GM13976 (cell line): ENCODE measurements at regions of chr9 and their contacts with region 1.

Region 1: GRCh38 chr9:129139993-129140396 is 28.8 kb downstream of the PTPA start:
- DNase-seq: peak; percentile 93
- CTCF ChIP-seq: no peak

Region 2: DNA sequence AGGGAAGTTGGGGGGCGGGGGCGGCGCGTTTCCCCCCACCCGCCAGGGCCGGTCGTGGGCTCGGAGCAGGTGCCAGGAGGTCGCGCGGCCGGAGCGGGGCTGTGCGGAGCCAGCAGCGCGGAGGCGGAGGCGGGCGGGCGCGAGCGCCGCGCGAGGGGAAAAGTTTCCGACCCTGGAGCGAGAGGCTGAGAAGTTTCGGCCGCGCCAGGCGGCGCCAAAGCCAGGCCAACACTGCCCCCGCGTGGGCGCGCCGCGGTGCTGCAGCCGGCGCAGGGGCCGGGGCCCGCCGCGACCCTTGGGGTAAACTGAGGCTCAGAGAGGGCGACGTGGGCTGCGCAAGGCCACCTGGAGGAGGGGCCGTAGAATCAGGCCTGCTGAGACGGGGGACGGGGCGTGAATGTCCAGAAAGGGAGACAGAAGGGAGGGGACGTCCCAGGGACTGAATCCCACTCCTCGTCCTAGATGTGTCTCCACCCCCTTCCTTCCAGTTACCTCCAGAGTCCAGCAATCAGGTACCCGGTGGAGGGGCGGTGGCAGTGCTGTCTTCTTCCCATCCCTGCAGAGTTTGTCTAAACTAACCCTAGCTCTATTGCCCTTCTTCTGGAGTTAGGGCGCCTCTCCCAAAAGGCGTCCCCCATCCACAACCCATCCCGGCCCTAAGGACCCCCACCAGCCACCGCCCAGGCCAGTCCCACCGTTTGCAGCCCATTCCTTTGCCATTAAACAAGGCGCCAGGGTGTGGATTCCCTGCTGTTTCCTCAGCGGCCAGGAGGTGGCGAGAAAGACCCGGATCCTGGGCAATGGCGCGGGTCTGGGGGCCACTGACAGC is 470.7 kb after region 1 on chr9:
- in situ Hi-C with region 1: loop called (anchors 10 kb)
- DNase-seq: peak; percentile 87
- CTCF ChIP-seq: peak; percentile 96